Heart left ventricle (tissue), 16 donors: ENCODE measurements at regions of chr12 and their contacts with region 1.

Region 1: DNA sequence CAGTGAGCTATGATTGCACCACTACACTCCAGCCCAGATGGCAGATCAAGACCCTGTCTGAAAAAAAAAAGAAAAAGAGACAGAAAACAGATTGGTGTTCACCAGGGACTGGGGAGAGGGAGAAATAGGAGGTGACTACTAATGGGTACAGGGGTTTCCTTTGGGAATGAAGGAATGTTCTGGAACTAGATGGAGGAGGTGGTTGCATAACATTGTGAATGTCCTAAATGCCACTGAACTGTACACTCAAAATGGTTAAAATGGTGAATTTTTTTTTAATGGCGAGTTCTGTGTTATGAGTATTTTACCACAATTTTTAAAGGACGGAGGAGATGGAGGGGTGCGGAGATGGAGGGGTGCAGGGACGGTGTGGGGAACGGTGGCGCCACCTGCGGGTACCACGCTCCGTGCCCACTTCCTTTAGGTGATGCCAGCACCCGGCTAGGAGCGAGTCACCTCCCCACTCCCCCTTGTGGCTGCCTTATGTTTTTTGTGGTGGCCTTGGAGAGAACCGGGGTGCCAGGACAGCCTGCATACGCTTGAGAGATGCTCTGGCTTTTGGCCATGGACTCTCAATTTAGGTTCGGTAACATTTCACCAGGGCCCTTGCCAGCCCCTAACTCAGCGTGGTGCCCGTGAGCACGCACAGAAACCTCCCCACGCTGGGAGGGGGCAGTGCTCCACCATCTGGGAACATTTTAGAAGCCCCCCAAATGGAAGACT is 16.1 kb downstream of the UBC start:
- DNase-seq: peak in 3 of 5 donors; percentile 37 to 67 (median 45)
- ATAC-seq: peak; percentile 50 to 74 (median 64)
- H3K4me3 ChIP-seq: no peak overlapping the region
- H3K27ac ChIP-seq: no peak overlapping the region
- H3K4me1 ChIP-seq: peaks cover 0 to 14% (median 0%) of the 10 kb centered on the region in 12 donors
- H3K27me3 ChIP-seq: no peaks in the 10 kb centered on the region
- CTCF ChIP-seq: peak in 11 of 12 donors; percentile 21 to 57 (median 45)
- POLR2A ChIP-seq: no peak

Region 2: GRCh38 chr12:124036674-124037109 is 861.7 kb before region 1 on chr12:
- intact Hi-C with region 1: loop called in 5 of 10 experiments (anchors 10 kb)
- DNase-seq: peak in 1 of 5 donors; percentile 49
- ATAC-seq: peak in 3 of 4 donors; percentile 35 to 55 (median 51)
- H3K4me3 ChIP-seq: no peak overlapping the region
- H3K27ac ChIP-seq: no peak overlapping the region
- H3K4me1 ChIP-seq: peaks cover 0 to 9% (median 0%) of the 10 kb centered on the region in 12 donors
- H3K27me3 ChIP-seq: no peaks in the 10 kb centered on the region
- CTCF ChIP-seq: peak; percentile 84 to 99 (median 94)
- POLR2A ChIP-seq: no peak

Region 3: DNA sequence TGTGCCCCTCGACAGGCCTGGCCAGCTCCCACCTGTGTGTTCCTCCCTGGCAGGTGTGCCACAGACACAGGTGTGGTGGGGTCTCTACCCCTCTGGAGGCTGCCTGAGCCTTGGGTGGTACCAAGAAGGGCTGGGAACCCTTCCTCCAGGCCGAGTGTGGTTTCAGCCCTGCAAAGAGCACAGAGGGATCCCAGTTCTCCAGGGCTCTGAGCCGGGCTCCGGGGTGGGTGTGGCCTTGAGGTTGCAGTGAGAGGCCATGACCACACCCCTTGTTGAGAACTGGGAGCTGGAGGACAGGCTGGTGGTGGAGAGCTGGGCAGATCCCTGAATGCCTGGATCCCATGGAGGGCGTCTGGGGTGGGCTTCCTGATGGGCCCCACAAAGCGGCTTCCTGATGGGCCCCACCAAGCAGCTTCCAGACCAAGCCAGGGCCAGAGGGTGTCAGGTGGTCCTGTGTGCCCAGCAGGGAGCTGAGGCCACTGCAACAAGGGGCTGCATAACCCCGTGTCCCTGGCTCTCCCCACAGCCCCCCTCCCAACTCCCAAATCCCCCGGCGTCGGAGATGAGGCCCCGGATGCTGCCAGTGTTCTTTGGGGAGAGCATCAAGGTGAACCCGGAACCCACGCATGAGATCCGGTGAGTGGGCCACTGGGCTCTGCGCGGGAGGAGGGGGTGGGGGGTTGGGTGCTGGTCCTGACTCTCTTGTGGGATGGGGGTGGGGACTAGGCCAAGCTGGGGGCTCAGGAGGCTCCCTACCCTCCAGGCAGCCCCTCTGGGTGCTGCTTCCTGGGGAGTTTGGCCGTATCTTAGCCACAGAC is 586.9 kb before region 1 on chr12:
- intact Hi-C with region 1: loop called in 1 of 10 experiments (anchors 10 kb)
- DNase-seq: no peak
- ATAC-seq: no peak
- H3K4me3 ChIP-seq: no peak overlapping the region
- H3K27ac ChIP-seq: no peak overlapping the region
- H3K4me1 ChIP-seq: no peaks in the 10 kb centered on the region
- H3K27me3 ChIP-seq: no peaks in the 10 kb centered on the region
- CTCF ChIP-seq: no peak
- POLR2A ChIP-seq: no peak

Region 4: GRCh38 chr12:124625867-124626675 is 272.3 kb before region 1 on chr12:
- intact Hi-C with region 1: no loop called
- DNase-seq: peak; percentile 88 to 94 (median 93)
- ATAC-seq: peak; percentile 83 to 96 (median 94)
- H3K4me3 ChIP-seq: peak overlapping the region in 1 of 12 donors; percentile 6
- H3K27ac ChIP-seq: peak overlapping the region; percentile 63 to 94 (median 86)
- H3K4me1 ChIP-seq: peaks cover 3 to 43% (median 35%) of the 10 kb centered on the region in 12 donors
- H3K27me3 ChIP-seq: no peaks in the 10 kb centered on the region
- CTCF ChIP-seq: no peak
- POLR2A ChIP-seq: peak in 1 of 2 donors; percentile 7

Region 5: DNA sequence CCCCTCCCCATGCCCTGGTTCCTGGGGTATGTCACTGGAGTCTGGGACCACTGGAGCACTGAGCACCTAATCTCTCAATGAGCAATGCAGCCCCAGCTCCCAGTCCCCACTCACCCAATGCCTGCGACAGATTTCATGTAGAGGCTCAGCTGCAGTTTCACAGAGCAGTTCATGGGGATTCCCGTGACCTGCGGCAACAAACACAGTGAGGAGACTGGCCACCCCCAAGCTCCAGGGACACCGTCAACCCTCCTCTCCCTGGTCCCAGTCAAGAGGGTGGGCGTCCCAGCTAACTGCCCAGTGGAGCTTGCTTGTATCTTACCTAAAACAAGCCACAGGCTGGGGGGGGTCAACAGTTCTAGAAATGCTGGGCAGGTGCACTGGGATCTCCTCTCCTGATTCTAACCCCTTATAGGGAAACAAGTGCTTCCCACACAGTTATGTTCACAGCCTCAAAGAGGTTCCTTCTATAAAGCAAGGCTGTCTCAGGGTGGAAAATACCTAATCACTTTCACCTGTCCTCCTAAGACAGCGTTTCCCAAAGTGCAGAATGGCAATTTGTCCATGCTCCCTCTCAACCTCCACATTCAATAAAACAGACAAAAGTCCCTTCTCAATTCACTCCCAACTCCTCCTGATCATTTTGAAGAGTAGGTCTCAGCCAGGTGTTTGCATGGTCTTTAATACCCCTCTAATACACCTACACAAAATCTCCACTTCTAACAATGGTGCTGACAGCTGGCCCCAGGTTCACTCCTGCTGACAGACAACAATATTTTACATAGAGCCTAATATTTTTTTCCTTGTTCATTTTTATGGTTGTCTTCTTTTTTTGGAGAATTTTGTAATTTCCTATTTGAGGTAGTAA is 103.0 kb before region 1 on chr12:
- intact Hi-C with region 1: no loop called
- DNase-seq: no peak
- ATAC-seq: no peak
- H3K4me3 ChIP-seq: no peak overlapping the region
- H3K27ac ChIP-seq: no peak overlapping the region
- H3K4me1 ChIP-seq: peaks cover 0 to 13% (median 0%) of the 10 kb centered on the region in 12 donors
- H3K27me3 ChIP-seq: no peaks in the 10 kb centered on the region
- CTCF ChIP-seq: no peak
- POLR2A ChIP-seq: no peak

Region 6: GRCh38 chr12:124863416-124864325 is 34.7 kb before region 1 on chr12 and contains the start of gene SCARB1:
- intact Hi-C with region 1: loop called in 3 of 10 experiments (anchors 5 to 10 kb)
- DNase-seq: peak; percentile 83 to 91 (median 85)
- ATAC-seq: peak; percentile 76 to 94 (median 91)
- H3K4me3 ChIP-seq: peak within 1 kb of the TSS; percentile 64 to 99 (median 81)
- H3K27ac ChIP-seq: peak within 1 kb of the TSS in 7 of 12 donors; percentile 38 to 69 (median 67)
- H3K4me1 ChIP-seq: peaks cover 5 to 49% (median 20%) of the 10 kb centered on the region in 12 donors
- H3K27me3 ChIP-seq: no peaks in the 10 kb centered on the region
- CTCF ChIP-seq: peak in 1 of 12 donors; percentile 13
- POLR2A ChIP-seq: peak in 1 of 2 donors; percentile 29
- total RNA-seq, gene SCARB1: 6.9 to 21.7 (median 15.2) TPM